Mammary epithelial cell (primary cell): ENCODE measurements at regions of chr17 and their contacts with region 1.

Region 1: DNA sequence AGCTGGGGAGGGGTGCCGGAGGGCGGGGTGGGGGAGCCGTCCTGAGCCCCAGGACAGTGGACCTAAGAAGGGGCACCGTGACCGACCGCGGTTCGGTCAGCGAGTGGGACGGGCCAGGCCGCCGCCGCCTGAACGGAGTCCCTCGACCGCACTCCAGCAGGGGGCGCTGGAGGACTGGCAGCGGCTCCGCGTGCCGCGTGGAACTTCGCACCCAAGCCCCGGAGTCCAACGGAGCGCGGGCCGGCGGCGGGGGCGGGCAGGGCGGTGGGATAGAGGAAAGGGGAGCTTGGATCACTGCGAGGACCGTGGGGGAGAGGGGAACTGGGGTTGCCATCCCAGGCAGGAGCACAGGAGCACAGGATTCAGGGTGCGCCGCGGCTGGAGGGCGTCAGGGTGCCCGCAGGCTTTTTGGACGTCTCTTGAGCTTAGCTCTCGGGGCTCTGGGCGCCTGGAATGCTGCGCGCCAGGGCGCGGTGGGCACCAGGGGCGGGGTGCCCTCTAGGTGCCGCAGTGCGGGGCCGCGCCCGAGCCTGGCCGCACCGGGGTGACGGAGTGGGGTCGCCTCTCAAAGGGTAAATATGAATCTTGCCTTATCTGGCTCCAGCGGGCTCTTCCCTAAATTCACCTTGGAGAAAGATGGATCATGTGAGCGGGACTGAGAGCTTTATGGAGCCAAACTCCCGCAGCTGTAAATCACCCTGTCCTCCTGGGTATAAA is 382 bp upstream of the OTOP2 start:
- DNase-seq: peak; percentile 33
- H3K4me3 ChIP-seq: peak overlapping the region; percentile 35 to 57 (median 40)
- H3K27ac ChIP-seq: no peak overlapping the region
- H3K4me1 ChIP-seq: peaks cover 26% of the 10 kb centered on the region
- H3K27me3 ChIP-seq: peaks cover 22% of the 10 kb centered on the region
- CTCF ChIP-seq: peak; percentile 55 to 90

Region 2: DNA sequence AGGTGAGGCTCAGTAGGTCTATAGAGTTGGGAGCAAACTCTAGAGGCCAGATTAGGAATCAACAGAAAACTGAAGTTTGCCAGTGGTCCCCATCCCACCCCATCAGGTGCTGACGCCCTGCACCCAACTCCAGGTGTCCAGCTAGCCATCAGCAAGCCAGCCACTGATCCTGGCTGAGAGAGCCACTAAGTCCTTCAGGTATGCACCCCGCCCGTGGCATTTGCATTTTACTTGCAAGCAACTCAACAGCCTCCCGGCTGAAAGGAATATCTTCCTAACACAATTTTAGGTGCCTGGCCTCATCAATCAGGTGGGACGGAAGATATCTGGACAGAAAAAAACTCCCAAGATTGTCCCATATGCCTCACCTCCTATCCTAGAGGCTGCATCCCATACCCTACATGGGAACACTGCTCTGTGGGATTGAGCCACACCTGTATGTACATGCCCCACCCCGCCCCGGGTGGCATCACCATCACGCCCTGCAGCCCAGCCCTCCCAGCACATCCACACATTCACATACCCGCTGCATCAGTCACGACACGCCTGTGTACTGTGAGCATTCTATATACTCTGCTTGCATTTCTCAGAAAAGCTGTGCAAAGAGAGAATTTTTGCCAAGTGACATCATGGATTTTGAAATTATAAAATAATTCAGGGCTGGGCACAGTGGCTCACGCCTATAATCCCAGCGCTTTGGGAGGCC is 20.3 kb after region 1 on chr17:
- CTCF ChIA-PET with region 1: no interaction called
- dilution Hi-C with region 1: no loop called
- in situ Hi-C with region 1: no loop called
- intact Hi-C with region 1: loop called (anchors 1 kb)
- DNase-seq: peak; percentile 94
- H3K4me3 ChIP-seq: no peak overlapping the region
- H3K27ac ChIP-seq: peak overlapping the region; percentile 79
- H3K4me1 ChIP-seq: peaks cover 18% of the 10 kb centered on the region
- H3K27me3 ChIP-seq: no peaks in the 10 kb centered on the region
- CTCF ChIP-seq: no peak